Posterior vena cava (tissue), 2 donors: ENCODE measurements at regions of chr3 and their contacts with region 1.

Region 1: DNA sequence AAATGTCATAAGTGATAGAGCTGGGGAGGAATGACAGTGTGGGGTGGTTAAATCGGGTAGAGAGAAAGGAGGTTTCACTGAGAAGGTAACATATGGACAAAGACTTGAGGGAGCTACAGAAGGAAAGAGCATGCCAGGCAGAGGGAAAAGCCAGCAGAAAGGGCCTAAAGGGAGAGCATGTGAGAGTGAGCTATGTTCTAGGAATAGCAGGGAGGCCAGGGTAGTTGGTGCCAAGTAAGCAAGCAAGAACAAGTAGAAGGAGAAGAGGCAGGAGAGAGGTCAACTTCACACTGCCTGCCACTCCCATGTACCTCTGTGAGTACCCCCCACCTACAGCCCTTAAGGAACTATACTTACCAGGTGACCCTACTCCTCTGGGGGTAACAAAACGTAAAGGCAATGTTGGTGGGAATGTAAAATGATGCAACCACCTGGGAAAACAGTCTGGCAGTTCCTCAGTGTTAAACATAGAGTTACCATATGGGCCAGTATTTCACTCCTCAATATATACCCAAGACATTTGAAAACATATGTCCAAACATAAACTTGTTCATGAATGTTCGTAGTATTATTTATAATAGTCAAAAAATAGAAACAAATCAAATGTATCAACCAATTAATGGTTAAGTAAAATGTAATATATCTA is 67.6 kb downstream of the SFMBT1 start:
- DNase-seq: no peak

Region 2: DNA sequence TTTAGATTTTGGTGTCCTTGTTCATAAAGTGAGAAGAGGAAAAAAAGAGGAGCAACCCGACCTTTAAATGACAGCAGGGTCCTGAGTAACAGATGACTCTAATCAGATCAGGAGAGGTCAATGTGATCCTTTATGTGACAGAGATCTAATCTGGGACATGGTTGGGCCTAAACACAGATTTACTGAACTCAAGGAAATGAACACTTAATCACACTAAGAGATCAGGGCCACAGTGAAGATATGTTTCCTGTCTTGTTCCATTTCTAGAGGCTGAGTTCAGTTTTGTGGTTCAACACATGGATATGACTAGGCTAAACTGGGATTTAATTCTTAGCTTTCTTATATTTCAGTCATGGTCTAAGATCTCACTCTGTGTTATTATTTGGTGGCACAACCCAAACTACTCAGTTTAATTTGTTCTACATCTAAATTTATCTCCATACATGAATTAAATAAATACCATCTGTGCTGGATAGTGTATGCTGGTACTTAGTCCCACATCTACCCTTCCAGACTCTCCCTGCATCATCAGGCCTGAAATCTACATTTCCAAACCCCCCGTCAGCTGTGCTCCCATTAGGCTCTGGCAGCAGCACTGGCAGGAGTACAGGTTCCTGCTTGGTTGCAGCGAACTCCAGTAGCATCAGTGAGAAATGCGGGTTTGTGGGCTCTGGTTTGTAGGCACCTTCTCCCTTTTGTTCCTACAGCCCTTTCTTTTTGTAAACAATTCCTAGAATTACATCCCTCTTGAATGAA is 45.0 kb after region 1 on chr3:
- intact Hi-C with region 1: loop called in 1 of 2 experiments (anchors 1 kb)
- DNase-seq: no peak